CD8-positive, alpha-beta T cell (primary cell): ENCODE measurements at regions of chr4 and their contacts with region 1.

Region 1: GRCh38 chr4:38030023-38030422 is 69.8 kb downstream of the PTTG2 start:
- DNase-seq: no peak
- ATAC-seq: no peak
- H3K4me3 ChIP-seq: no peak overlapping the region
- H3K4me3 Mint-ChIP-seq: no peak overlapping the region
- H3K27ac ChIP-seq: no peak overlapping the region
- H3K27ac Mint-ChIP-seq: no peak overlapping the region
- H3K4me1 ChIP-seq: no peaks in the 10 kb centered on the region
- H3K4me1 Mint-ChIP-seq: no peaks in the 10 kb centered on the region
- H3K27me3 ChIP-seq: no peaks in the 10 kb centered on the region
- H3K27me3 Mint-ChIP-seq: no peaks in the 10 kb centered on the region
- CTCF ChIP-seq: no peak

Region 2: DNA sequence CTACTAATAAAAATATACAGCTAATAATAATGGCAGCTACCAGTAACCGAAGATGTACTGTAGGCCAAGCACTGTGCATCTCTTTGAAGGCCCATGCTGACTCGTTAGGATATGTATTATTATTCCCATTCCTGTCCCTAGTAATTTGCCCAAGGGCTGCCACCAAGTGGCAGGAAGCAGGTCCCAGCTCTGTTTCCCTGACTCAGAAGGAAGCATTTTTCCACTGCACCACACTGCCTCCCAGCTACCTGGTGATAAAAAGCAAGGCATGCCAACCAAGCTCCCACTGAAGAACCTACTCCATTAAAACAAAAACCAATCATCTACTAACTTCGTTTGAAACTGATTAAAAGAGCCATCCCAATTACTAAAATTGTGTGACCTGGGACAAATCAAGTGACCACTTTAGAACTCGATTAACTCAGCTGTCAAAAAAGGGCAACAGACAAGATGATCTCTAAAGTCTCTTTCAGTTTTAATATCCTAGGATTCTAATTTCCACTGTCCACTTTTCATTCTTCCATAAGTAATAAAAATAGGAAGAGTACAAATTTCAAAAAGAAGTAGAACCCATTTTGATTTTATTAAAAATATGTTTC is 227.9 kb before region 1 on chr4:
- CTCF ChIA-PET with region 1: interaction called, 79 read pairs
- POLR2A ChIA-PET with region 1: interaction called, 5 read pairs
- intact Hi-C with region 1: loop called (anchors 1 kb)
- DNase-seq: no peak
- ATAC-seq: no peak
- H3K4me3 ChIP-seq: no peak overlapping the region
- H3K4me3 Mint-ChIP-seq: no peak overlapping the region
- H3K27ac ChIP-seq: no peak overlapping the region
- H3K27ac Mint-ChIP-seq: no peak overlapping the region
- H3K4me1 ChIP-seq: no peaks in the 10 kb centered on the region
- H3K4me1 Mint-ChIP-seq: peaks cover 2% of the 10 kb centered on the region
- H3K27me3 ChIP-seq: no peaks in the 10 kb centered on the region
- H3K27me3 Mint-ChIP-seq: no peaks in the 10 kb centered on the region
- CTCF ChIP-seq: no peak

Region 3: DNA sequence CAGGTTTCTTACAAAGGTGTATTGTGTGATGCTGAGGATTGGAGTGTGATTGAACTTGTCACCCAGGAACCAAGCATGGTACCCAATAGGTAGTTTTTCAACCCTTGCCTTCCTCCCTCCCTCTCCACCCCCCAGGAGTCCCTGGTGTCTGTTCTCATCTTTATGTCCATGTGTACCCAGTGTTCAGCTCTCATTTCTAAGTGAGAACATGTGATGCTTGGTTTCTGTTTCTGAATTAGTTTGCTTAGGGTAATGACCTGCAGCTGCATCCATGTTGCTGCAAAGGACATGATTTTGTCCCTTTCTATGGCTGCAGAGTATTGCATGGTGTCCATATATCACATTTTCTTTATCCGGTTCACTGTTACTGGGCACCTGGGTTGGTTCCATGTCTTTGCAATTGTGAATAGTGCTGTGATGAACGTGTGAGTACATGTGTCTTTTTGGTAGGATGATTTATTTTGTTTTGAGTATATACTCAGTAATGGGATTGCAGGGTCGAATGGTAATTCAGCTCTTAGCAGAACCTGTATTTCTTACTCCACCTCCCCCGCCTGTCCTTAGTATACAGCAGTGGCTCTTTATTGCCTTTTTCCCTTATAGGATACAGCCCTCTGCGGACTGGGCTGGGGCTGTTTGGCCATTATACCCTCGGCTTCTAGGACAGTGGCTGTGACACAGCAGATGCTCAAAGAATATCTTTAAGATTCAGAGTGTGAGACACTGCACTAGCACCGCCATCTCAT is 75.6 kb after region 1 on chr4:
- CTCF ChIA-PET with region 1: no interaction called
- POLR2A ChIA-PET with region 1: no interaction called
- intact Hi-C with region 1: no loop called
- DNase-seq: no peak
- ATAC-seq: no peak
- H3K4me3 ChIP-seq: no peak overlapping the region
- H3K4me3 Mint-ChIP-seq: no peak overlapping the region
- H3K27ac ChIP-seq: no peak overlapping the region
- H3K27ac Mint-ChIP-seq: no peak overlapping the region
- H3K4me1 ChIP-seq: no peaks in the 10 kb centered on the region
- H3K4me1 Mint-ChIP-seq: no peaks in the 10 kb centered on the region
- H3K27me3 ChIP-seq: no peaks in the 10 kb centered on the region
- H3K27me3 Mint-ChIP-seq: no peaks in the 10 kb centered on the region
- CTCF ChIP-seq: no peak

Region 4: GRCh38 chr4:38141808-38142500 is 111.9 kb after region 1 on chr4:
- CTCF ChIA-PET with region 1: no interaction called
- POLR2A ChIA-PET with region 1: no interaction called
- intact Hi-C with region 1: no loop called
- DNase-seq: no peak
- ATAC-seq: no peak
- H3K4me3 ChIP-seq: no peak overlapping the region
- H3K4me3 Mint-ChIP-seq: no peak overlapping the region
- H3K27ac ChIP-seq: no peak overlapping the region
- H3K27ac Mint-ChIP-seq: no peak overlapping the region
- H3K4me1 ChIP-seq: no peaks in the 10 kb centered on the region
- H3K4me1 Mint-ChIP-seq: no peaks in the 10 kb centered on the region
- H3K27me3 ChIP-seq: no peaks in the 10 kb centered on the region
- H3K27me3 Mint-ChIP-seq: no peaks in the 10 kb centered on the region
- CTCF ChIP-seq: no peak